ENCODE measurements at regions of chr17 and their contacts with region 1.

Region 1: DNA sequence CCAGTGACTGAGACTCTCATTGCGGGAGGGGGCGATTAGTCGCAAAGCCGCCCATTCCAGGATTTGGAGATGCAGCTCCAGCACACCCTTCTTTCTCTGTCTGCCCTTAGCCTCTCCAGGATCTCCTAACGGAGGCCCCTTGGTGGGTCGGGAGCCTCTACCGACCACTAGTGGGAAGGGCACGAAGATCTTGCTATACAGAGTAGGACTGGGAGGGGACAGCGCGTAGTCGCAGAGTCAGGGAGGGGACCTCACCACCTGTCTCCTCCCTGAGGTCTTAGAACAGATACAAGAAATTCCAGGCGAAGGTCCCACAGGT is 588 bp upstream of the SMTNL2 start:
- DNase-seq: no peak
- H3K4me3 ChIP-seq: no peak overlapping the region
- H3K27ac ChIP-seq: no peak overlapping the region
- H3K4me1 ChIP-seq: peaks cover 3% of the 10 kb centered on the region
- H3K27me3 ChIP-seq: peaks cover 26% of the 10 kb centered on the region
- CTCF ChIP-seq: no peak

Region 2: GRCh38 chr17:4520894-4521600 is 62.7 kb before region 1 on chr17:
- CTCF ChIA-PET with region 1: no interaction called
- dilution Hi-C with region 1: no loop called
- in situ Hi-C with region 1: no loop called
- intact Hi-C with region 1: no loop called
- DNase-seq: peak; percentile 88
- H3K4me3 ChIP-seq: no peak overlapping the region
- H3K27ac ChIP-seq: peak overlapping the region; percentile 32
- H3K4me1 ChIP-seq: peaks cover 26% of the 10 kb centered on the region
- H3K27me3 ChIP-seq: no peaks in the 10 kb centered on the region
- CTCF ChIP-seq: no peak

Region 3: GRCh38 chr17:4648741-4649140 is 65.0 kb after region 1 on chr17:
- CTCF ChIA-PET with region 1: no interaction called
- dilution Hi-C with region 1: loop called (anchors 5 kb)
- in situ Hi-C with region 1: no loop called
- intact Hi-C with region 1: no loop called
- DNase-seq: no peak
- H3K4me3 ChIP-seq: no peak overlapping the region
- H3K27ac ChIP-seq: no peak overlapping the region
- H3K4me1 ChIP-seq: no peaks in the 10 kb centered on the region
- H3K27me3 ChIP-seq: peaks cover 5% of the 10 kb centered on the region
- CTCF ChIP-seq: no peak

Measured in mammary epithelial cell (primary cell).